K562 (cell line): ENCODE measurements at regions of chr3 and their contacts with region 1.

Region 1: GRCh38 chr3:48918388-48919214 is at the start of gene ARIH2:
- DNase-seq: peak; percentile 87 to 95 (median 90)
- ATAC-seq: peak; percentile 92
- H3K4me3 ChIP-seq: peak within 1 kb of the TSS; percentile 98
- H3K27ac ChIP-seq: peak within 1 kb of the TSS; percentile 97
- H3K4me1 ChIP-seq: peaks cover 3 to 26% of the 10 kb centered on the region in 2 experiments; a peak in 3 of 5 replicates
- H3K27me3 ChIP-seq: no peaks in the 10 kb centered on the region
- CTCF ChIP-seq: peak; percentile 0 to 32 (median 10); a peak in 2 of 6 replicates
- EP300 ChIP-seq: no peak
- POLR2A ChIP-seq: peak; percentile 92
- RAD21 ChIP-seq: peak; percentile 19 to 40; a peak in 3 of 4 replicates
- polyA plus RNA-seq, gene ARIH2: 27.0 to 27.3 TPM

Region 2: GRCh38 chr3:48739955-48740823 is 178.4 kb before region 1 on chr3:
- CTCF ChIA-PET with region 1: no interaction called
- POLR2A ChIA-PET with region 1: interaction called, 5 read pairs
- in situ Hi-C with region 1: no loop called
- intact Hi-C with region 1: loop called (anchors 5 kb)
- DNase-seq: peak; percentile 81 to 85 (median 83)
- ATAC-seq: peak; percentile 94
- H3K4me3 ChIP-seq: no peak overlapping the region
- H3K27ac ChIP-seq: peak overlapping the region; percentile 66
- H3K4me1 ChIP-seq: peaks cover 7 to 17% of the 10 kb centered on the region in 2 experiments; a peak in 4 of 5 replicates
- H3K27me3 ChIP-seq: no peaks in the 10 kb centered on the region
- CTCF ChIP-seq: peak; percentile 78 to 83 (median 80)
- EP300 ChIP-seq: no peak
- POLR2A ChIP-seq: no peak
- RAD21 ChIP-seq: peak in 1 of 2 experiments; percentile 55; a peak in 3 of 4 replicates

Region 3: DNA sequence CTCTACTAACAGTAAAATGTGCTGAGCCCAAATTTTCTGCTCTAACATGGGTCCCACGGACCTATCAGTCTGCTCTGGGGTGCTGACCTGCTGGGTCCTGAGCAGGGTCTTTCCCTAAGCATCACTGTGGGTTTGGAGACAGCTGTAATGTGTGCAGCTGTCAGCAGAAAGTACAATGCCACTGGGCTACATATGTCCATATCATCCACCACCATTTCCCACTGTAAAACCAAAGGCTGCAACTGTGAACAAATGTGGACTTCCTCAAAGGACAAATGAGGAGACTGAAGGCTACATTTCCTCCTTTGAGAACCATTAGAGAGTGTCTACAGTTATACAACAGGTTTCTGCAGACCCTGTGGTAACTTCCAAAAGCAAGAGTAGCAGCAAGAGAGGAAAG is 167.7 kb before region 1 on chr3:
- CTCF ChIA-PET with region 1: no interaction called
- POLR2A ChIA-PET with region 1: no interaction called
- in situ Hi-C with region 1: no loop called
- intact Hi-C with region 1: no loop called
- DNase-seq: no peak
- ATAC-seq: no peak
- H3K4me3 ChIP-seq: no peak overlapping the region
- H3K27ac ChIP-seq: no peak overlapping the region
- H3K4me1 ChIP-seq: no peaks in the 10 kb centered on the region
- H3K27me3 ChIP-seq: no peaks in the 10 kb centered on the region
- CTCF ChIP-seq: no peak
- EP300 ChIP-seq: no peak
- POLR2A ChIP-seq: no peak
- RAD21 ChIP-seq: no peak

Region 4: GRCh38 chr3:48847504-48848423 is 70.8 kb before region 1 on chr3 and contains the start of gene PRKAR2A:
- CTCF ChIA-PET with region 1: no interaction called
- POLR2A ChIA-PET with region 1: interaction called, 3 read pairs
- in situ Hi-C with region 1: no loop called
- intact Hi-C with region 1: loop called (anchors 5 kb)
- DNase-seq: peak; percentile 90 to 93 (median 92)
- ATAC-seq: peak; percentile 88
- H3K4me3 ChIP-seq: peak within 1 kb of the TSS; percentile 81
- H3K27ac ChIP-seq: peak within 1 kb of the TSS; percentile 87
- H3K4me1 ChIP-seq: peaks cover 13% of the 10 kb centered on the region in 2 experiments; a peak in 4 of 5 replicates
- H3K27me3 ChIP-seq: no peaks in the 10 kb centered on the region
- CTCF ChIP-seq: no peak
- EP300 ChIP-seq: no peak
- POLR2A ChIP-seq: peak; percentile 61; the same call in 1 of the 2 replicates
- RAD21 ChIP-seq: no peak
- polyA plus RNA-seq, gene PRKAR2A: 15.9 to 19.8 TPM

Region 5: GRCh38 chr3:48934333-48934991 is 15.9 kb after region 1 on chr3:
- CTCF ChIA-PET with region 1: no interaction called
- POLR2A ChIA-PET with region 1: interaction called, 25 read pairs
- in situ Hi-C with region 1: no loop called
- intact Hi-C with region 1: no loop called
- DNase-seq: no peak
- ATAC-seq: no peak
- H3K4me3 ChIP-seq: no peak overlapping the region
- H3K27ac ChIP-seq: peak overlapping the region; percentile 68; the same call in 1 of the 3 replicates
- H3K4me1 ChIP-seq: peaks cover 0 to 17% of the 10 kb centered on the region in 2 experiments; a peak in 4 of 5 replicates
- H3K27me3 ChIP-seq: no peaks in the 10 kb centered on the region
- CTCF ChIP-seq: no peak
- EP300 ChIP-seq: no peak
- POLR2A ChIP-seq: no peak
- RAD21 ChIP-seq: no peak

Region 6: DNA sequence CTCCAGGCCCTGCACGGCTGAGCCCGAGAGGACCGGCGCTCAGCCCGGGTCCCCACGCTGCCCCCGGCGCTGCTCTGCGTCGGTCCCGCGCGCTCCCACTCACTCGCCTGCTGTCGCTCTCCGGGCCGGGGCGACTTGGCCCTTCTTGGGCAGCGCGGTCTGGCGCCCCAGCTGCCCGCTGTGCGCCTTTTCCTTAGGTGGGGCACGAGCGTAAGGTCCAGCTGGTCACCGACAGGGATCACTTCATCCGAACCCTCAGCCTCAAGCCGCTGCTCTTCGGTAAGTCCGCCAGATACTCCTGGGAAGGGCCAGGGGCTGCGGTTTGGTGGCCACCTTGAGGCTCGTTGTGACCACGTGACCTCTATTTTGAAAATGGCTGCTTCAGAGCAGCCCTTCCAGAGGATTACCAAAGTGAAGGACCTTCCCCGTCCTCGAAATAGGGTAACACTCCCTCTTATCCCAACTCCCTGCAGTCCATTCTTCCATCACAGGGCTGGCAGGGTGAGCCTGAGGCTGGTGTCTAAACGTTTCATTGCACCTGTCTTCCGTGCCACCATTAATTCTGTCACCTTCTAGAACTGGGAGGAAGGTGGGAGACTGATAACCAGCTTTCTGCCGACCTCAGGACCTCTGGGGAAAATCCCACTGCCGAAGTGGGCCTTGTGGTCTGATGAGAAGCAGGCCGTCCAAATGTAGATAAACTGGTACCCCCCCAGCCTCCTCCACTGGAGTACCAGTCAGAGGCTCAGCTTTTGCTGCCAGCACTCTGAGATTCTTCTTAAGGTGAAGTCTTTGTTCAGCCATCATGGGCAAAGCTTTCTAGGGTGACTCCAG is 72.3 kb after region 1 on chr3:
- CTCF ChIA-PET with region 1: no interaction called
- POLR2A ChIA-PET with region 1: no interaction called
- in situ Hi-C with region 1: no loop called
- intact Hi-C with region 1: no loop called
- DNase-seq: no peak
- ATAC-seq: no peak
- H3K4me3 ChIP-seq: no peak overlapping the region
- H3K27ac ChIP-seq: no peak overlapping the region
- H3K4me1 ChIP-seq: peaks cover 9 to 21% of the 10 kb centered on the region in 2 experiments
- H3K27me3 ChIP-seq: no peaks in the 10 kb centered on the region
- CTCF ChIP-seq: no peak
- EP300 ChIP-seq: no peak
- POLR2A ChIP-seq: no peak
- RAD21 ChIP-seq: no peak

Region 7: DNA sequence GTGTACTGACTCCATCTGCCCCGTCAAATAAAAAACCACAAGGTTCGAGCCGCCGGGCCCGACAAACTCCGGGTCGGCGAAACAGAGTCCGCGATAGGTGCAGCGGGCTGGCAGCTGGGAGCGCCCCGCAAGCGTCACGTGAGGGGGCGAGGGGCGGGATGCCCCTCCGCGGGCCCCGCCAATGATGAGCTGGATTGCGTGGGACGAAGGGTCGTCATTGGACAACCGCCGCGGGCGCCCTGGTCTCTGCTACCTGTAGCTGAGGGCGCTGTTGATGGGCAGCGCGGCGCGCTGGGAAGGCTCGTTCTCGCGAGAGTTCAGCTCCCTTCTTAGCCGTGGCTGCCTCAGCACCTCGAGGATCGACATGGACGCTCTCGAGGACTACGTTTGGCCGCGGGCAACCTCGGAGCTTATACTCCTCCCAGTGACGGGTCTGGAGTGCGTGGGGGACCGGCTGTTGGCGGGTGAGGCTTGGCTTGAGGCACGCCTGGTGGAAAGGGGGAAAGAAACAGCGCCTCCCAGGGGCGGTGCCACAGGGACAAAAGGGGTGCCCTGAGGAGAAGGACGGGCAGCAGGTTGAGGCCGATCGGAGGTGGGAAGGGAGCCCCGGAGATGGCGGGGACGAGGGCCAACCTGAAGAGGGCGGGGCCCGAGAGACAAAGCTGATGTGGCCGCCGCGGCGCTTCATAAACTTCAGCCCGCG is 88.6 kb after region 1 on chr3 and contains the start of gene WDR6:
- CTCF ChIA-PET with region 1: interaction called, 4 read pairs
- POLR2A ChIA-PET with region 1: no interaction called
- in situ Hi-C with region 1: no loop called
- intact Hi-C with region 1: loop called (anchors 5 kb)
- DNase-seq: peak; percentile 91 to 97 (median 94)
- ATAC-seq: peak; percentile 89
- H3K4me3 ChIP-seq: peak within 1 kb of the TSS; percentile 80
- H3K27ac ChIP-seq: peak within 1 kb of the TSS; percentile 99
- H3K4me1 ChIP-seq: peaks cover 19 to 45% of the 10 kb centered on the region in 2 experiments; a peak in 4 of 5 replicates
- H3K27me3 ChIP-seq: no peaks in the 10 kb centered on the region
- CTCF ChIP-seq: peak; percentile 39 to 55 (median 42); a peak in 5 of 6 replicates
- EP300 ChIP-seq: no peak
- POLR2A ChIP-seq: peak; percentile 94
- RAD21 ChIP-seq: peak in 1 of 2 experiments; percentile 15; a peak in 1 of 4 replicates
- polyA plus RNA-seq, gene WDR6: 8.9 to 14.2 TPM

Region 8: GRCh38 chr3:49021813-49022687 is 103.4 kb after region 1 on chr3 and contains the start of gene NDUFAF3:
- CTCF ChIA-PET with region 1: no interaction called
- POLR2A ChIA-PET with region 1: interaction called, 11 read pairs
- in situ Hi-C with region 1: no loop called
- intact Hi-C with region 1: no loop called
- DNase-seq: peak; percentile 74 to 91 (median 77)
- ATAC-seq: peak; percentile 76
- H3K4me3 ChIP-seq: peak within 1 kb of the TSS; percentile 74
- H3K27ac ChIP-seq: peak within 1 kb of the TSS; percentile 99
- H3K4me1 ChIP-seq: peaks cover 14 to 67% of the 10 kb centered on the region in 2 experiments; a peak in 4 of 5 replicates
- H3K27me3 ChIP-seq: no peaks in the 10 kb centered on the region
- CTCF ChIP-seq: peak; percentile 79 to 83 (median 82)
- EP300 ChIP-seq: no peak
- POLR2A ChIP-seq: no peak; the same call in none of the 2 replicates
- RAD21 ChIP-seq: no peak
- polyA plus RNA-seq, gene NDUFAF3: 17.0 to 36.3 TPM

Region 9: GRCh38 chr3:49133226-49133951 is 214.8 kb after region 1 on chr3:
- CTCF ChIA-PET with region 1: no interaction called
- POLR2A ChIA-PET with region 1: no interaction called
- in situ Hi-C with region 1: no loop called
- intact Hi-C with region 1: no loop called
- DNase-seq: peak; percentile 75 to 86 (median 82)
- ATAC-seq: peak; percentile 89
- H3K4me3 ChIP-seq: peak overlapping the region; percentile 53
- H3K27ac ChIP-seq: peak overlapping the region; percentile 77
- H3K4me1 ChIP-seq: peaks cover 2 to 32% of the 10 kb centered on the region in 2 experiments; a peak in 4 of 5 replicates
- H3K27me3 ChIP-seq: peaks cover 0 to 5% of the 10 kb centered on the region in 2 experiments; a peak in 1 of 5 replicates
- CTCF ChIP-seq: no peak
- EP300 ChIP-seq: no peak
- POLR2A ChIP-seq: peak; percentile 41; the same call in 1 of the 2 replicates
- RAD21 ChIP-seq: no peak